ENCODE measurements at regions of chr12 and their contacts with region 1.

Region 1: GRCh38 chr12:76790564-76791552 is 26.9 kb downstream of the ZDHHC17 start:
- H3K4me3 Mint-ChIP-seq: no peak overlapping the region
- H3K27ac Mint-ChIP-seq: no peak overlapping the region
- H3K4me1 Mint-ChIP-seq: peaks cover 11% of the 10 kb centered on the region
- H3K27me3 Mint-ChIP-seq: no peaks in the 10 kb centered on the region

Region 2: GRCh38 chr12:76621582-76622024 is 169.3 kb before region 1 on chr12:
- intact Hi-C with region 1: loop called (anchors 1 kb)
- H3K4me3 Mint-ChIP-seq: no peak overlapping the region
- H3K27ac Mint-ChIP-seq: no peak overlapping the region
- H3K4me1 Mint-ChIP-seq: no peaks in the 10 kb centered on the region
- H3K27me3 Mint-ChIP-seq: no peaks in the 10 kb centered on the region

Region 3: DNA sequence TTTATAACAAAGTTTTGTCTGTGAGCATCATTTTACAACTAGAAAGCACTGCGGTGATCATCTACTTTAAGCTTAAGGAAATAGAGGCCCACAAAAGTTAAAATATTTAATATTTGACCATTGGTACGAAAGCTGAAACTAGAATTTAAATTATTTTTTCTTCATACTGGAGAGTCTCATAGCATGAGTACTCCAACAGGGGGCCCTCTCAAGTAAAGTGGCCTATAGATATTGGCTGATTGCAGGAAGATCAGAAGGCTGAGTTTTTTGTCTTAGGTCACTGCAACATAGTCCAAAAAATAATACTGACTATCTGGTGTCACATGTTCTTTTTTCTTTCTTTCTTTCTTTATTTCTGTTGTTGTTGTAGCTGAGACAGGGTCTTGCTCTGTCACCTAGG is 102.2 kb before region 1 on chr12:
- intact Hi-C with region 1: loop called (anchors 2 kb)
- H3K4me3 Mint-ChIP-seq: no peak overlapping the region
- H3K27ac Mint-ChIP-seq: no peak overlapping the region
- H3K4me1 Mint-ChIP-seq: peaks cover 15% of the 10 kb centered on the region
- H3K27me3 Mint-ChIP-seq: no peaks in the 10 kb centered on the region

Region 4: DNA sequence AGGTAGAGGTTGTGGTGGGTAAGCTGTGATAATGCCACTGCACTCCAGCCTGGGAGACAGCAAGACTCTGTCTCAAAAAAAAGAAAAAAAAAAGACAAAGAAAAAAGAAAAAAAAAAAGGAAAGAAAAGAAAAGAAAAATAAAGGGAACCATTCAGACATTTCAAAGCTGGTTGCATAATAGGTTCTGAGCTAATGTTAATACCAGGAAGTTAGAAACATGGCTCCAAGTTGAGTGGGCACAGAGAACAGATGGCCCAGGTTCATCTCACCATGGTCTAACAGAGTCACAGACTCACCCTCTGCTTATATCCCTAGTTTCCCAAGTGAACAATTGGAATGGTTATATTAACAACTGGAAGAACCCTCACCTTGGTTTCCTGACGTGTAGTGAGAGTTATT is 44.3 kb before region 1 on chr12:
- intact Hi-C with region 1: no loop called
- H3K4me3 Mint-ChIP-seq: no peak overlapping the region
- H3K27ac Mint-ChIP-seq: no peak overlapping the region
- H3K4me1 Mint-ChIP-seq: peaks cover 11% of the 10 kb centered on the region
- H3K27me3 Mint-ChIP-seq: no peaks in the 10 kb centered on the region

Region 5: GRCh38 chr12:76763743-76764675 is 26.8 kb before region 1 on chr12 and contains the start of gene ZDHHC17:
- intact Hi-C with region 1: loop called (anchors 2 kb)
- H3K4me3 Mint-ChIP-seq: peak within 1 kb of the TSS; percentile 94
- H3K27ac Mint-ChIP-seq: peak within 1 kb of the TSS; percentile 98
- H3K4me1 Mint-ChIP-seq: peaks cover 47% of the 10 kb centered on the region
- H3K27me3 Mint-ChIP-seq: no peaks in the 10 kb centered on the region

Measured in dendritic cell treated with granulocyte-macrophage colony-stimulating factor and Interleukin-4, amounts not matched to agents 40 ng/mL and 50 ng/mL, for 4 days (primary cell).